Mammary epithelial cell (primary cell): ENCODE measurements at regions of chr6 and their contacts with region 1.

Region 1: DNA sequence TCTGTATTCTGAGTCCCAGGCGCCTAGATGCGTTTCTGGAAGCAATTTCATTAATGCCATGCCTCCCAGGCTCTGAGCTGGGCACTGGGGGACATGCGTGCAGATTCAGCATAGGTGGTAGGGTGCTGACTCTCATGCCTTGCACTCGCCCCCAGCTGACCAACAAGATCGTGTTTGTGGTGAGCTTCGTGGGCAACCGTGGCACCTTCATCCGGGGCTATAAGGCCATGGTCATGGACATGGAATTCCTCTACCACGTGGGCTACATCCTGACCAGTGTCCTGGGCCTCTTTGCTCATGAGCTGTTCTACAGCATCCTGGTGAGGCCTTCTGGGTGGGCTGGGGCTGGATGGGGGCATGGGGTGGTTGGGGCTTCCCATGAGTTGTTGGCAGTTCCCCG is 21.6 kb downstream of the UQCC2 start:
- DNase-seq: no peak
- H3K4me3 ChIP-seq: no peak overlapping the region
- H3K27ac ChIP-seq: no peak overlapping the region
- H3K4me1 ChIP-seq: peaks cover 18% of the 10 kb centered on the region
- H3K27me3 ChIP-seq: no peaks in the 10 kb centered on the region
- CTCF ChIP-seq: no peak

Region 2: DNA sequence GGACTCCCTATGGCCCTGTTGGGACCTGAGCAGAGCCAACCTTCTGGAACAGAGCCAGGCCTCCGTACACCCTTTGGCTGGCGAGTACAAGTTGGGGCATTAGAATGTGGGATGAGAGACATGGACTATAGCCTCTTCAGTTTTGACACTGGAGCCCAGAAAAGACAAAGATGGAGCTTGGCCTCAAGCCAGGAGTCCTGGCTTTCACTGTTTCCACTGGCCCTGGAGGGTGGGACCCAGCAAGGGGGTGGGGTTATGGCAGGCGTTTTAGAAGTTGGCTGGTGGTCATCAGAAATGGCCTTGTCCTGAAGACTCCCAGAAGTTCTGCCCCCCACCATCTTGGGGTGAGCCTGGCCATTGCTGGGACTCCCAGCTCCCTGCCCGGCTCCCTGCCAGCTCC is 47.0 kb before region 1 on chr6:
- CTCF ChIA-PET with region 1: no interaction called
- dilution Hi-C with region 1: loop called (anchors 5 kb)
- in situ Hi-C with region 1: no loop called
- intact Hi-C with region 1: no loop called
- DNase-seq: no peak
- H3K4me3 ChIP-seq: no peak overlapping the region
- H3K27ac ChIP-seq: no peak overlapping the region
- H3K4me1 ChIP-seq: peaks cover 16% of the 10 kb centered on the region
- H3K27me3 ChIP-seq: no peaks in the 10 kb centered on the region
- CTCF ChIP-seq: no peak